A549 (cell line): ENCODE measurements at regions of chr16 and their contacts with region 1.

Region 1: DNA sequence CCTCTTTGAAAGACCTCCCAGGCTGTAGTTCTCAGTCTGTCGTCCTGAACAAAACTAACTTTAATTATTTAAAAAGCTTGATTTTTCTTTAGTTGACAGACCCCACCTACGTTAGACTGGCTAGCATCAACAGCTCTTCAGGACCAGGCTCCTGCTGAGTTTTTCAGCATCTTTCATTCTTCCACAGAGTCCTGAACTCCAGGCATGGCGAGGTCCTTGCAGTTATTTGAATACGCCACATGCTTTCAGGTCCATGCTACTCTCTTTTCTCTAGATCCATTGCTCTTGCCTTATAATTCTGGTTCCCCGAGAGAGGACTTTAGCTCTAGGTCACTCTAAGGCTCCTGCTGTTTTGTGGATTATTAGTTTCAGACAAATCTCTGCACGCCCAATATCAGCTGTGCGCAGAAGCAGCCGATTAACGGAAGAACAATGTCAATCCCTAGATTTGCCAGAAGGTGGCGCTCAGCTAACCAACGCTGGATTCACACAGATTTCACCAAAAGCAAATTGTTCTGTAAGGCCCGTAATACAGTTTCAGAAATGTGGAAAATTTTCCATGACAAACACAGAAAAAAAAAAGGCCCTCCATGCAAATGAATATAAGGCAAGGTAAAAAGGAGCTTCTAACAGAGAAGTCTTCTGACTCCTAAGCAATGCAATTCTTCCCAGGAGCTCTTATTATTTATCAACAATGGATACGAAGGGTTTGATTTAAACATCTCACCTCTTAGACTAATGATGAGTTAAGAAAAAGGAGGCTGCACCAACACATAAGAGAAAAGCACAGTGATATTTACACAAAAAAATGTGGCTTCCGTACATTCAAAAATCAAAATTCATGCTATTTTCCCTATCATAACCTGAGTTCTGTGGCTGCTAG is 33.5 kb upstream of the BCO1 start:
- DNase-seq: peak; percentile 61 to 63
- ATAC-seq: peak; percentile 65 to 80; a peak in 4 of 6 replicates
- H3K4me3 ChIP-seq: no peak overlapping the region
- H3K27ac ChIP-seq: no peak overlapping the region
- H3K4me1 ChIP-seq: no peaks in the 10 kb centered on the region
- CTCF ChIP-seq: peak; percentile 71
- EP300 ChIP-seq: no peak
- POLR2A ChIP-seq: no peak
- RAD21 ChIP-seq: peak; percentile 49 to 50; a peak in 4 of 5 replicates

Region 2: GRCh38 chr16:81174654-81175571 is 30.1 kb before region 1 on chr16:
- CTCF ChIA-PET with region 1: interaction called, 15 read pairs
- POLR2A ChIA-PET with region 1: no interaction called
- DNase-seq: peak; percentile 73 to 80
- ATAC-seq: peak; percentile 88 to 92
- H3K4me3 ChIP-seq: 0 out of 3 replicates have a peak overlapping the region, but pooled peaks have one; percentile 0
- H3K27ac ChIP-seq: peak overlapping the region; percentile 94 to 95
- H3K4me1 ChIP-seq: peaks cover 46% of the 10 kb centered on the region
- CTCF ChIP-seq: no peak
- EP300 ChIP-seq: peak in 1 of 2 experiments; percentile 28; a peak in 1 of 5 replicates
- POLR2A ChIP-seq: no peak
- RAD21 ChIP-seq: peak in 1 of 2 experiments; percentile 34; a peak in 2 of 5 replicates

Region 3: GRCh38 chr16:81189100-81189664 is 15.9 kb before region 1 on chr16:
- CTCF ChIA-PET with region 1: interaction called, 32 read pairs
- POLR2A ChIA-PET with region 1: interaction called, 7 read pairs
- DNase-seq: no peak
- ATAC-seq: no peak; a peak in 1 of 6 replicates
- H3K4me3 ChIP-seq: no peak overlapping the region
- H3K27ac ChIP-seq: peak overlapping the region in 1 of 2 experiments; percentile 42; a peak in 1 of 6 replicates
- H3K4me1 ChIP-seq: peaks cover 18% of the 10 kb centered on the region
- CTCF ChIP-seq: no peak
- EP300 ChIP-seq: no peak
- POLR2A ChIP-seq: no peak
- RAD21 ChIP-seq: no peak

Region 4: GRCh38 chr16:81216706-81217105 is 11.7 kb after region 1 on chr16:
- CTCF ChIA-PET with region 1: interaction called, 17 read pairs
- POLR2A ChIA-PET with region 1: no interaction called
- DNase-seq: no peak
- ATAC-seq: no peak
- H3K4me3 ChIP-seq: no peak overlapping the region
- H3K27ac ChIP-seq: no peak overlapping the region
- H3K4me1 ChIP-seq: no peaks in the 10 kb centered on the region
- CTCF ChIP-seq: no peak
- EP300 ChIP-seq: no peak
- POLR2A ChIP-seq: no peak
- RAD21 ChIP-seq: no peak

Region 5: DNA sequence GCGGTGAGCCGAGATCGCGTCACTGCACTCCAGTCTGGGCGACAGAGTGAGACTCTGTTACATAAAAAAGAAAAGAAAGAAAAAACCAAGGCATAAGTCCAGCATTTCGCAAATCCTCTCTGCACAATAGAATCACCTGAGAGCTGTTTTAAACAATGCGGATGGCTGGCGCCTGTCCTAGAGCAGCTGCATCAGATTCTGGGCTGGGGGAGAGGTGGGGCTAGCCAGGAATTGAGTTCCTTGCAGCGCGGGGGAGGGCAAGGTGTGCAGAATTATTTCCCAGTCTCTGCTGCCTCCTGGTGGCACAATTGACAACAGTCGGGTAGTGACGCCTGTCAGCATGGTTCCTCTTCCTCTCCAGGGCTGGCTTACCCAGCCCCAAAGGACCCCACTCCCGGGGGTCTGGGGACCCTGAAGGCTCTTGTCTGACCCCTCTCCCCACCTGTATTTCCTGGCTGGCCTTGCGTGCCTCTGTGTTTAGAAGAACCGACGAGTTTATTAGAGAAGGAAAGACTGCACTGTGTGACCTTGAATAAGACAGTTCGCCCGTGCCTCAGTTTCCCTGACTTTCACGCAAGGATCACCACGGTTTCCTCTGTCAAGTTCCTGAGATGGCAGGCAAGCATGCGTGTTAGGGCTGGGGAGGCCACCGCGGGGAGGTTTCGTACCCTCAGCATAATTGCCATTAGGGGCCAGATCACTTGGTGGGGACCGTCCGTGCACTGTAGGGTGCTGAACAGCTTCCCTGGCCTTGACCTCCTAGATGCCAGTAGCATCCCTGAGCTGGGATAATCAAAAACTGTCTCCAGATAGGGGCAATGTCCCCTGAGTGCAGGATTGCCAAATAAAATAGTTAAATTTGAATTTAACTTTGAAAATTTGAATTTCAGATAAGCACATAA is 533.1 kb after region 1 on chr16:
- CTCF ChIA-PET with region 1: interaction called, 10 read pairs
- POLR2A ChIA-PET with region 1: no interaction called
- DNase-seq: peak; percentile 86 to 87
- ATAC-seq: peak; percentile 93 to 94
- H3K4me3 ChIP-seq: peak overlapping the region; percentile 32; the same call in 2 of the 3 replicates
- H3K27ac ChIP-seq: peak overlapping the region; percentile 65 to 78
- H3K4me1 ChIP-seq: peaks cover 13% of the 10 kb centered on the region
- CTCF ChIP-seq: peak; percentile 94
- EP300 ChIP-seq: no peak
- POLR2A ChIP-seq: no peak
- RAD21 ChIP-seq: peak; percentile 98